MCF 10A (cell line): ENCODE measurements at regions of chr20 and their contacts with region 1.

Region 1: GRCh38 chr20:49219089-49219923 is at the start of gene DDX27:
- DNase-seq: peak; percentile 99
- H3K4me3 Mint-ChIP-seq: peak within 1 kb of the TSS; percentile 94
- H3K27ac Mint-ChIP-seq: peak within 1 kb of the TSS; percentile 96
- H3K4me1 Mint-ChIP-seq: peaks cover 6% of the 10 kb centered on the region
- H3K27me3 Mint-ChIP-seq: no peaks in the 10 kb centered on the region
- CTCF ChIP-seq: no peak
- total RNA-seq, gene DDX27: 45.7 and 56.4 TPM in 2 replicates

Region 2: GRCh38 chr20:49046087-49046900 is 173.0 kb before region 1 on chr20 and contains the start of gene CSE1L:
- CTCF ChIA-PET with region 1: interaction called, 5 read pairs
- POLR2A ChIA-PET with region 1: interaction called, 10 read pairs
- intact Hi-C with region 1: no loop called
- DNase-seq: peak; percentile 94
- H3K4me3 Mint-ChIP-seq: peak within 1 kb of the TSS; percentile 95
- H3K27ac Mint-ChIP-seq: peak within 1 kb of the TSS; percentile 97
- H3K4me1 Mint-ChIP-seq: peaks cover 24% of the 10 kb centered on the region
- H3K27me3 Mint-ChIP-seq: no peaks in the 10 kb centered on the region
- CTCF ChIP-seq: no peak
- total RNA-seq, gene CSE1L: 65.2 and 101 TPM in 2 replicates

Region 3: GRCh38 chr20:49148601-49149000 is 70.7 kb before region 1 on chr20:
- CTCF ChIA-PET with region 1: interaction called, 17 read pairs
- POLR2A ChIA-PET with region 1: interaction called, 3 read pairs
- intact Hi-C with region 1: no loop called
- DNase-seq: no peak
- H3K4me3 Mint-ChIP-seq: no peak overlapping the region
- H3K27ac Mint-ChIP-seq: no peak overlapping the region
- H3K4me1 Mint-ChIP-seq: peaks cover 7% of the 10 kb centered on the region
- H3K27me3 Mint-ChIP-seq: no peaks in the 10 kb centered on the region
- CTCF ChIP-seq: no peak

Region 4: DNA sequence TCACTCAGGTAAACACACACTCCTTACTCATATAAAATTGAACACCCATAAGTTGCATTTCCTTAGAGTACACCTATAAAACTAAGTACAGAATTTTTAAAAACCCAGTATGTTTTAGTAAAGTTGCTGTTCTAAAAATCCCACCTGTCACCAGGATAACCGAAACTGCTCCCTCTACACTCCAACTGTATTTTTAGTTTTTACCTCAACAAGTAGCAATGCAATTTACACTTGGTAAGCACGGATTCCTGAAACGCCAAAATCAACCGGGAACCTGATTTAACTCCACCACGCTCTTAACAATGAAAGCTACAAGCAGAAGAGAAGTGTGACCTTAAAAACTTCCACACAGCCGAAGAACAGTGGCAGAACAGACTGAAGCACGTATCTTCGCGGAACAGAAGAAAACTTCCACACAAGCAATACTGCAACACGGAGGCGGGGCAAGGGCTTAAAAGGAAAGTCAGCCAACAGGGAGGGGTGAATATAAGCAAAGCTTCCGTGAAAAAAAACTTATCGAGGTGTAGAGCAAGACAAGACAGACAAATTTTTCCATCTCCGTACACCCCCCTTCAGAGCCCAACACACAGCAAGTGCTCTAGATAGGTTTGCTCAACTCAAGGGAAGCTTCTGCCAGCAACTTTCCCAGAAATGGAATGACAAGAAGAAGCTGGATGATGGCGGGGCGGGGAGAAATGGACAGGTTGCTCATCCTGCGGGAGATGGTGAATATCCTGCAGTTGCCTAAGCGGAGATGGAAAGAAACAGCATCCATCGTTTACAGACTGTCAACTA is 32.6 kb before region 1 on chr20:
- CTCF ChIA-PET with region 1: interaction called, 42 read pairs
- POLR2A ChIA-PET with region 1: interaction called, 150 read pairs
- intact Hi-C with region 1: loop called (anchors 1 kb)
- DNase-seq: peak; percentile 68
- H3K4me3 Mint-ChIP-seq: peak overlapping the region; percentile 83
- H3K27ac Mint-ChIP-seq: peak overlapping the region; percentile 75
- H3K4me1 Mint-ChIP-seq: peaks cover 6% of the 10 kb centered on the region
- H3K27me3 Mint-ChIP-seq: no peaks in the 10 kb centered on the region
- CTCF ChIP-seq: no peak

Region 5: GRCh38 chr20:49237531-49237930 is 18.2 kb after region 1 on chr20:
- CTCF ChIA-PET with region 1: interaction called, 8 read pairs
- POLR2A ChIA-PET with region 1: interaction called, 19 read pairs
- intact Hi-C with region 1: no loop called
- DNase-seq: no peak
- H3K4me3 Mint-ChIP-seq: no peak overlapping the region
- H3K27ac Mint-ChIP-seq: peak overlapping the region; percentile 8
- H3K4me1 Mint-ChIP-seq: no peaks in the 10 kb centered on the region
- H3K27me3 Mint-ChIP-seq: no peaks in the 10 kb centered on the region
- CTCF ChIP-seq: no peak

Region 6: DNA sequence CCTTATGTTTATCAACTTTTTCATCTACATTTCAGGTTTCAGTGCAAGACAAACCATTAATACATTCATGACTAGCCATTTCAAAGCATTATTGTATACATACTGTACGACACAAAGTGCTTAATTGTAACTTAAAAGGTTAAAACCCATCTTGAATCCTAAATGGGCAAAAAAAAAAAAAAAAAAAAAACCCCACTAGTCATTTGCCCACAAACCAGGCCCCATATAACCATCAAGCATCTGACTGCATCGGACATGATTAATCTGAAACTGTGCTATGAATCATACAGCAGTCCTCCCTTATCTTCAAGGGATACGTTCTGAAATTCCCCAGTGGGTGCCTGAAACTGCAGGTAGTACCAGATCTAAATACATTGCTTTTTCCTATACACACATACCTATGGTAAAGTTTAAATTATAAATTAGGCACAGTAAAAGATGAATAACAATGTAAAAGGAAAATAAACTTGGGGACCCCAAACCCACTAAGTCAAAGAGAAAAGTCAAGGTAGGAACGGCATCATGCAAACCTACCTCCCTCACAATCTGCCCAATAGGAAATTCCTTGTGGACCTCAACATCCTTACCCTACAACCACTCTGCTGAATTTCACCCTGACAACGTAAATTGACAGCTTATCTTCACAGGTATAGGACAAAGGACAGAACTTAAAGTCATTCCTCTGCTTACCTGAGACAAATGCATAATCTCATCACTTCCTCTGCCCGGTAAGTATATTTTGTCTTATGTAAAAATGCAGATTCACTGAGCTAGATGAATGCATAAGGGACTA is 480.1 kb after region 1 on chr20:
- CTCF ChIA-PET with region 1: no interaction called
- POLR2A ChIA-PET with region 1: no interaction called
- intact Hi-C with region 1: no loop called
- DNase-seq: peak; percentile 64
- H3K4me3 Mint-ChIP-seq: no peak overlapping the region
- H3K27ac Mint-ChIP-seq: peak overlapping the region; percentile 50
- H3K4me1 Mint-ChIP-seq: peaks cover 32% of the 10 kb centered on the region
- H3K27me3 Mint-ChIP-seq: no peaks in the 10 kb centered on the region
- CTCF ChIP-seq: no peak